ENCODE measurements at regions of chr2 and their contacts with region 1.

Region 1: GRCh38 chr2:7427293-7428060 is 510.3 kb downstream of the RNF144A start:
- DNase-seq: no peak
- H3K4me3 ChIP-seq: no peak overlapping the region
- H3K27ac ChIP-seq: no peak overlapping the region
- H3K4me1 ChIP-seq: no peaks in the 10 kb centered on the region
- H3K27me3 ChIP-seq: peaks cover 56% of the 10 kb centered on the region
- CTCF ChIP-seq: peak; percentile 76

Region 2: DNA sequence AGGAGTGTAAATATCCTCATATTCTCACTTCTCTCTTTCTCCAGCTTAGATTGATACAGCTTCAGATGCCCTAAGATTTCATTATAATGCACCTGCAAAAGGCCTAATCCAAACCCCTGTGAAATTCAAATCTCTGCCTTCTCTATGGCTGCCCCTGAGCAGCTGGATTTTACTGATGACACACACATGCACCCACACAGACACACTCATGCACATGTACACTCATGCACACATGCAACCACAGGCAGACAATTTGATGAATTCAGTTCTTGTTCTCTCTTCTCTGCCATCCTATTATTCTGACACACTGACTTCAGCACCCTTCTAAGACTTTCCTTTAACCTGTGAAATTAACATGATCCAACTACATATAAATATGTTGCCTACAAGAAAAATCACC is 53.0 kb after region 1 on chr2:
- CTCF ChIA-PET with region 1: no interaction called
- POLR2A ChIA-PET with region 1: no interaction called
- intact Hi-C with region 1: no loop called
- DNase-seq: no peak
- H3K4me3 ChIP-seq: no peak overlapping the region
- H3K27ac ChIP-seq: no peak overlapping the region
- H3K4me1 ChIP-seq: no peaks in the 10 kb centered on the region
- H3K27me3 ChIP-seq: no peaks in the 10 kb centered on the region
- CTCF ChIP-seq: no peak

Region 3: DNA sequence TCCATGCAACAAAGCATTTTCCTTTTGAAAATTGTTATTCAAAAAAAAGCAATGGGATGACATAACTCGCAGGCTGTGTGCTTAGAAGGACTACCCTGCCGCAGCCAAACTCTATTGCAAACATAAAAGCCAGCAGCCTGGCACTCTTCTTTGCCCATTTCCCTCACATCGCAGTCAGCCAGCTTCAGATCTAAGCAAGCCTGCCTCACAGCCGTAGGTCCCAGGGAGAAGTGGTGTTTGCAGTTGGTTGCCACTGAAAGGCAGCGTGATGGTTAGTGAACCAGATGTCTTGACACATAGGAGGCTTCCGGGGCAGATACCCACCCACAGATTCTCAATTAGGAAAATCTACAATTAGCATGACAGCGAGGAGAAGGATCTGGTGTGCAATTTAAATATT is 145.0 kb after region 1 on chr2:
- CTCF ChIA-PET with region 1: no interaction called
- POLR2A ChIA-PET with region 1: no interaction called
- intact Hi-C with region 1: no loop called
- DNase-seq: no peak
- H3K4me3 ChIP-seq: no peak overlapping the region
- H3K27ac ChIP-seq: no peak overlapping the region
- H3K4me1 ChIP-seq: no peaks in the 10 kb centered on the region
- H3K27me3 ChIP-seq: peaks cover 17% of the 10 kb centered on the region
- CTCF ChIP-seq: no peak

Region 4: GRCh38 chr2:7672027-7672684 is 244.7 kb after region 1 on chr2:
- CTCF ChIA-PET with region 1: no interaction called
- POLR2A ChIA-PET with region 1: no interaction called
- intact Hi-C with region 1: loop called (anchors 2 kb)
- DNase-seq: peak in 1 of 2 experiments; percentile 24
- H3K4me3 ChIP-seq: no peak overlapping the region
- H3K27ac ChIP-seq: no peak overlapping the region
- H3K4me1 ChIP-seq: no peaks in the 10 kb centered on the region
- H3K27me3 ChIP-seq: 0 out of 2 replicates have a peak, but pooled peaks cover 3% of the 10 kb centered on the region
- CTCF ChIP-seq: peak; percentile 84

Region 5: GRCh38 chr2:8761529-8762164 is 1334.2 kb after region 1 on chr2:
- CTCF ChIA-PET with region 1: no interaction called
- POLR2A ChIA-PET with region 1: no interaction called
- intact Hi-C with region 1: loop called (anchors 2 kb)
- DNase-seq: no peak
- H3K4me3 ChIP-seq: no peak overlapping the region
- H3K27ac ChIP-seq: no peak overlapping the region
- H3K4me1 ChIP-seq: no peaks in the 10 kb centered on the region
- H3K27me3 ChIP-seq: no peaks in the 10 kb centered on the region
- CTCF ChIP-seq: peak; percentile 76

Measured in PC-9 (cell line).